Right ventricle myocardium superior (tissue), 1 donor: ENCODE measurements at regions of chr2 and their contacts with region 1.

Region 1: DNA sequence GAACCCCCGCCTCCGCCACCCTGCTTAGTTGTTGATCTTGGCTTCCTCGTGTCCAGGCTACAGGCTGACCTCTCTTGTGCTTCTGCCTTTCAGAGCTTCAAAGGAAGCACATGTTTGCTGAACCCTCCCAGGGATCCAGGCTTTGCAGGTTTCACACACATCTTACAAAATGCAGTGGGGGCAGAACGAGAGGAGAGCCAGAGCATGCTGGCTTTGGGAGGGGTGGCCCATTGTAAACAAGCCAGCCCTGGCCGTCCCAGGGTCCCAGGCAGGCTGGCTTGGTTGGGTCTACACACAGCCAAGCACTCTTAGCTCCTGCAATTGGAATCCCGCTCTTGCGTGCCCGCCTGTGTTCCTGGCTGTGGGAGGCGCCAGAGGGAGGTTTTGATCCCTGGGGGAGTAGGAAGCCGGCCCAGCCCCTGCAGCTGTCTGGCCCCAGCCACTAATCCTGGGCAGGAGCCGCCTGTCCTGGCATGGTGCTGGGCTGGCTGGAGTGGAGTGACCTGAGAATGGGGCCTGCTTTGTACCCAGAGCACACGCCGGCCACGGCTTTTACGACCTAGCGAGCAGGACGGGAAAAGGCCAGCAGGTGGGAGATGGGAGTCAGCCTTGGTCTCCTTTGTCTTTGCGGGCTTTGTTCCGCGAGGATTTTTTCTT is 53.9 kb downstream of the SH3BP4 start:
- DNase-seq: peak; percentile 74
- ATAC-seq: peak; percentile 81

Region 2: DNA sequence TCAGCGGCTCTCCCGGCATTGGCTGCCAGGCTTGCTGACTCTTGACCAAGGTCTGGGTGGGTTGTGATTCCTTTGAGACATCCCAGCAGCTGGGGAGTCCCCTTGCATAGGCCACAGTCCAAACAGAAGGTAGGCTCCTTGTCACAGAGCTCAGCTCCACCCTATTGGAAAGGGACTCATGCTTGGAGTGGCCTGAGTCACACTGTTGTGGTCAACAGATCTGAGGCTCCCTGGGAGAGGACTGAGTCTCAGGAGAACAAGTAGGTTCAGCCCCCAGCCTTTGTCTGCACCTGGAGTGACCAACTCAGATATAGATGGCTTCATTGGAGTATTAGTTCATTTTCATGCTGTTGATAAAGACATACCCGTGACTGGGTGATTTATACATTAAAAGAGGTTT is 86.0 kb before region 1 on chr2:
- intact Hi-C with region 1: no loop called
- DNase-seq: no peak
- ATAC-seq: no peak

Region 3: GRCh38 chr2:235087812-235088495 is 82.2 kb after region 1 on chr2:
- intact Hi-C with region 1: loop called (anchors 10 kb)
- DNase-seq: peak; percentile 75
- ATAC-seq: peak; percentile 68